ENCODE measurements at regions of chr1 and their contacts with region 1.

Region 1: DNA sequence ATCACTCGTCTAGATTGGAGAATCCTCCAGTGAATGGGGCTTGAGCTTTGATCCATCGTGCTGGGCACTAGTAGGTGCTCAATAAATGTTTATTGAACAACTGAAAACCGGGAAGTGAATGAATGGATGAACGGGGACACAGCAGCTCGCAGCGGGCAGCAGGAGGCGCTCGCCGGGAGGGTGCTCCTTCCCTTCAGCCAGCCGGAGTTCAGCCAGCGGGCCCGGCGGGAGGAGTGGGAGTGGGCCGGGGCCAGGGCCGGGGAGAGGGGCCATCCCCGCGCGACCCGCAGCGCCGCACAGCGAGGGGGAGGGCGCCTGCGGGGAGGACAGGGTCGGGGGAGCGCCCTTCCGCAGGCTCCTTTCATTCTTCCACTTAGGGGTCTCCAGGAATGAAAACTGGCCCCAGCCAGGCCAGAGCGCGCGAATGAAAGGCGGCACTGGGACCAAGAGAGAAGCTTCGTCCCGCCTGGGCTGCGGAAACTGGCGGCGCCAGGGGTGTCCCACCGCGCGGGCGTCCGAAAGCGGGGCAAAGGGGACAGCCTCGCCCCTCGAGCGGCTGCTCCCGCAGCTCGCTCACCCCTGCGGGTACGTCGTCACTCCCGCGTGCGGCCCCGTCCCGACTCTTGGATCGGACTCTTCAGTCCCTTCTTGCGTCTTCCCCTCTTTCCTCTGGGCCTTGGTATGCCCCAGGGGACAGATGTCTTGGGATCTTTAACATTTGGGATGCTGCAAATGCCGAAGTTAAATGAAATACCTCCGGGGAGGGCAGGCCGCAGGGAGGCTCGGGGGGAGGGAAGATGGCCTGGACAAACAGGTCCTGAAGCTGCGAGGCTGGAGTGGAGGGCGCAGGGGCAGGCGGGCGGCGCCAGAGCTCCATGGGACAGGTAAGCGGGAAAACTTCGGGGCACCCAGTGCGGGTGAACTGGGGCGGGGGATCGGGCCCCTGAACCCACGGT is 3.6 kb upstream of the INAVA start:
- DNase-seq: peak; percentile 95
- ATAC-seq: peak; percentile 51
- H3K4me3 ChIP-seq: peak overlapping the region; percentile 67
- H3K27ac ChIP-seq: peak overlapping the region; percentile 74
- H3K4me1 ChIP-seq: peaks cover 59% of the 10 kb centered on the region
- H3K27me3 ChIP-seq: no peaks in the 10 kb centered on the region
- CTCF ChIP-seq: peak; percentile 100

Region 2: GRCh38 chr1:200180821-200181220 is 710.3 kb before region 1 on chr1:
- CTCF ChIA-PET with region 1: no interaction called
- POLR2A ChIA-PET with region 1: no interaction called
- intact Hi-C with region 1: no loop called
- DNase-seq: peak; percentile 94
- ATAC-seq: peak; percentile 49
- H3K4me3 ChIP-seq: no peak overlapping the region
- H3K27ac ChIP-seq: peak overlapping the region; percentile 88
- H3K4me1 ChIP-seq: peaks cover 77% of the 10 kb centered on the region
- H3K27me3 ChIP-seq: no peaks in the 10 kb centered on the region
- CTCF ChIP-seq: peak; percentile 94

Region 3: GRCh38 chr1:201023517-201023902 is 132.4 kb after region 1 on chr1 and contains the start of gene KIF21B:
- CTCF ChIA-PET with region 1: interaction called, 13 read pairs
- POLR2A ChIA-PET with region 1: no interaction called
- intact Hi-C with region 1: no loop called
- DNase-seq: peak; percentile 52
- ATAC-seq: peak; percentile 55
- H3K4me3 ChIP-seq: no peak within 1 kb of the TSS
- H3K27ac ChIP-seq: no peak within 1 kb of the TSS
- H3K4me1 ChIP-seq: peaks cover 8% of the 10 kb centered on the region
- H3K27me3 ChIP-seq: peaks cover 56% of the 10 kb centered on the region
- CTCF ChIP-seq: no peak
- total RNA-seq, gene KIF21B: 0.46 and 0.66 TPM in 2 replicates

Region 4: DNA sequence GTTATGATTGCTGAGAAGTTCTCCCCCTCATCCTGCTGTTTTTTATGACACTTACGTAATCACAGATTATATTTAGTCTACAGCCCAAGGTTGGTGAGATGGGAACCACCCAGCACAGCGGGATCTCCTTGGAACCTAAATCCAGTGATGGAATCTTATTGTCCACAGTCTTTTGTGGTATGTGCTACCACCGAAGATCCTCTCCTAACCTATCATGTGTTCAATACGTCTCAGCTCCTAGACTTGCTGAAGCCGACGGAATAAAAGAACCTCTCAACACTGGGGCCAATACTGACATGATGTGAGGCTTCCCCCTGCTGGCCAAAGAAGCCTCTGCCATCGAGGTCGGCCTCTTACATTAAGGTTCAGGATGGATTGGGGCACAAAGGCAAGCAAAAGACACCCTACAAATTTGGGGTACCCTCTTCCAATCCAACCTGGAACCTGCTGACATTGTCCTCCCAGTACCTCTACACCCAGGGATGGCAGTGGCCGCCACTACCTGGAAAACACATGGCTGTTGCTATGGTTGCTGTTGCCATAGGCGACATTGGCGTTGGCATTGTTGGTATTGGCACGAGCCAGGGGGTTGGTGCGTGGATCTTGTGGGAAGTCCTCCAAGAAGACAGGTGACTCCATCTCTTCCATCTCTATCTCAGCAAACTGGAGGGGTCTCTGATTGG is 151.8 kb after region 1 on chr1:
- CTCF ChIA-PET with region 1: interaction called, 5 read pairs
- POLR2A ChIA-PET with region 1: no interaction called
- intact Hi-C with region 1: loop called (anchors 1 kb)
- DNase-seq: peak; percentile 92
- ATAC-seq: peak; percentile 94
- H3K4me3 ChIP-seq: no peak overlapping the region
- H3K27ac ChIP-seq: no peak overlapping the region
- H3K4me1 ChIP-seq: no peaks in the 10 kb centered on the region
- H3K27me3 ChIP-seq: peaks cover 15% of the 10 kb centered on the region
- CTCF ChIP-seq: peak; percentile 100

Region 5: GRCh38 chr1:201114236-201115131 is 223.4 kb after region 1 on chr1:
- CTCF ChIA-PET with region 1: no interaction called
- POLR2A ChIA-PET with region 1: no interaction called
- intact Hi-C with region 1: loop called (anchors 5 kb)
- DNase-seq: peak; percentile 100
- ATAC-seq: peak; percentile 94
- H3K4me3 ChIP-seq: peak overlapping the region; percentile 73
- H3K27ac ChIP-seq: no peak overlapping the region
- H3K4me1 ChIP-seq: peaks cover 13% of the 10 kb centered on the region
- H3K27me3 ChIP-seq: no peaks in the 10 kb centered on the region
- CTCF ChIP-seq: peak; percentile 100

Measured in PC-3 (cell line).